Ovary (tissue), 10 donors: ENCODE measurements at regions of chr20 and their contacts with region 1.

Region 1: GRCh38 chr20:5735845-5736525 is 14.2 kb upstream of the SHLD1 start:
- DNase-seq: peak in 2 of 5 donors; percentile 22 to 27
- H3K4me3 ChIP-seq: no peak overlapping the region
- H3K27ac ChIP-seq: no peak overlapping the region
- H3K4me1 ChIP-seq: peaks cover 2% of the 10 kb centered on the region
- H3K27me3 ChIP-seq: no peaks in the 10 kb centered on the region
- CTCF ChIP-seq: no peak
- EP300 ChIP-seq: no peak
- POLR2A ChIP-seq: no peak

Region 2: GRCh38 chr20:5667705-5668528 is 68.1 kb before region 1 on chr20:
- intact Hi-C with region 1: loop called in 1 of 4 experiments (anchors 10 kb)
- DNase-seq: no peak
- H3K4me3 ChIP-seq: no peak overlapping the region
- H3K27ac ChIP-seq: no peak overlapping the region
- H3K4me1 ChIP-seq: no peaks in the 10 kb centered on the region
- H3K27me3 ChIP-seq: no peaks in the 10 kb centered on the region
- CTCF ChIP-seq: no peak
- EP300 ChIP-seq: no peak
- POLR2A ChIP-seq: no peak